Activated B cell treated with CpG ODN at 0.5 μM for 24 hours (primary cell): ENCODE measurements at regions of chr1 and their contacts with region 1.

Region 1: DNA sequence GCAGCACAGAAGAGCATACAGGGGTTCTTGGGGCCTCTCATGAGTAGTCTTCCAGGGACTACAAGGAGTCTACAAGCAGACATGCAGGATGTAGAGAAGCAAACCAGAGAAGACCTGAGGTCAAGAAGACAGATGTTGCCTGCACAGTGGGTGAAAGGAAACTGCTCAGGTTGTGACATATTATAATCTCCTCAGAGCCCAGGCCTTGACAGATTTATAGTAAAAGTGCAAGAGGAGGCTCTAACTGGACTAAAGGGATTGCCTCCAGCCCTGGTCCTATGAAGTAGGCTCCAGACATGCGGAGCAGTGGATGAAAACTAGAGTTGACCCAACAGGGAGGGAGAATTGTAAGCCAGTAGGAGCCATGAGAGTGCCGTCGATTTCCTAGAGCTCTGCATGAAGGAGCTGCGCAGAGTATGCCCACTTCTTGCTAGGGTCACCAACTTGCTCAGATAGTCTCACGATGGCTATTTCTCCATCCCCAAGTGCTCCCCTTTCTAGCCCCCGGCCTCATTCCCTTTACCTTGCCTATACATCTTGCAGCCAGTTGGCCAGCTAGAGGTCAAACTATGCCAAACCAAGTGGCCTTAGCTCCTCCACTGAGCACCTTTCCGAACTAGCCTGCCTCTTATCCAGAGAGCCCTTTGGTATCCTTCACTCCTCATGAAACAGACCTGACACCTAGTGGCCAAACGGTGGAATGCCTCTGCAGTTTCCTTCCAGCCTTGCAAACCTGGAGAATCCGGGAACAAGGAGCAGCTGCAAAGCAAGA is 36.2 kb upstream of the IPO9 start:
- DNase-seq: peak; percentile 24
- ATAC-seq: peak; percentile 54
- H3K4me3 Mint-ChIP-seq: no peak overlapping the region
- H3K27ac Mint-ChIP-seq: no peak overlapping the region
- H3K4me1 Mint-ChIP-seq: peaks cover 3% of the 10 kb centered on the region
- H3K27me3 Mint-ChIP-seq: no peaks in the 10 kb centered on the region
- CTCF ChIP-seq: peak; percentile 63

Region 2: GRCh38 chr1:201559679-201560162 is 233.0 kb before region 1 on chr1:
- CTCF ChIA-PET with region 1: interaction called, 91 read pairs
- POLR2A ChIA-PET with region 1: no interaction called
- intact Hi-C with region 1: loop called (anchors 1 kb)
- DNase-seq: peak; percentile 57
- ATAC-seq: peak; percentile 88
- H3K4me3 Mint-ChIP-seq: no peak overlapping the region
- H3K27ac Mint-ChIP-seq: no peak overlapping the region
- H3K4me1 Mint-ChIP-seq: peaks cover 4% of the 10 kb centered on the region
- H3K27me3 Mint-ChIP-seq: no peaks in the 10 kb centered on the region
- CTCF ChIP-seq: peak; percentile 34

Region 3: GRCh38 chr1:201628490-201628889 is 164.2 kb before region 1 on chr1:
- CTCF ChIA-PET with region 1: no interaction called
- POLR2A ChIA-PET with region 1: no interaction called
- intact Hi-C with region 1: no loop called
- DNase-seq: no peak
- ATAC-seq: no peak
- H3K4me3 Mint-ChIP-seq: no peak overlapping the region
- H3K27ac Mint-ChIP-seq: no peak overlapping the region
- H3K4me1 Mint-ChIP-seq: no peaks in the 10 kb centered on the region
- H3K27me3 Mint-ChIP-seq: no peaks in the 10 kb centered on the region
- CTCF ChIP-seq: no peak

Region 4: GRCh38 chr1:201731142-201731541 is 61.6 kb before region 1 on chr1:
- CTCF ChIA-PET with region 1: no interaction called
- POLR2A ChIA-PET with region 1: no interaction called
- intact Hi-C with region 1: no loop called
- DNase-seq: no peak
- ATAC-seq: no peak
- H3K4me3 Mint-ChIP-seq: no peak overlapping the region
- H3K27ac Mint-ChIP-seq: no peak overlapping the region
- H3K4me1 Mint-ChIP-seq: peaks cover 3% of the 10 kb centered on the region
- H3K27me3 Mint-ChIP-seq: peaks cover 20% of the 10 kb centered on the region
- CTCF ChIP-seq: no peak

Region 5: DNA sequence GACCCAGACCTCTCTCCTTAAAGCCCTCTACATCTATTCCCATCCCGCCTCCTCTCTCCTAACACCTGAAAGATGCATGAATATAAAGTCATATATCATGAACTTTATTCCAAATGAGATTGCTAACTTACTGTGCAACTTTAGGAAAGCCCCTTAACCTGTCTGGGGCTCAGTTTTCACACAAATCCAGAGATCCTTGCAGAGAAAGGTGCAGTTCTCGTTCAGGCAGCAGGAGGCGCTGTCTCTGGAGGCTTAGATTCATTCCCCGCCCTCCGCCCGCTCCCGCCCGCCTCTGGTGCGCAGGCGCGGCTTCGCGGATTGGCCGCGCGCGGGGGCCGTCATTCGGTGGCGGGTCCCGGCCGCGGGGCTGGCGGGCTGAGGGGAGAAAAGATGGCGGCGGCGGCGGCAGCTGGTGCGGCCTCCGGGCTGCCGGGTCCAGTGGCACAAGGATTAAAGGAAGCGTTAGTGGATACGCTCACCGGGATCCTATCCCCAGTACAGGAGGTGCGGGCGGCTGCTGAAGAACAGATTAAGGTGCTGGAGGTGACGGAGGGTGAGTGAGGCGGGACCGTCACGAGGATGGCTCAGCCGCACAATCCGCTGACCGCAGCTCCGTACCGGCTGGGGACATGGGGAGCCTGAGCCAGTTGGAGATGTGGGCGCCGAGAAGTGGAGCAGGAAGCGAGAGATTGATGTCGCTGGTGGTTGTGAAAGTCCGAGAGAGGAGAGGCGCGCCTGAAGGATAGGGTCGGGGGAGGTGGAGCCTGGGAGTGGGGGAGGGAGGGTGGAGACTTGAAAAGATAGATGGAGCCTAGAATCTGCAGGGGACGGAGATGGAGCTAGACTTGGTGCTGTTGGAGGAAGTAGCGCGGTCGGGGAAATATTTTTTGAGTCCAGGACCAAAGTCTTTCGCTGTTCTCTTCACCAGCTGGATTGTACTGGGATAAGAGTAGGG is 36.4 kb after region 1 on chr1 and contains the start of gene IPO9:
- CTCF ChIA-PET with region 1: no interaction called
- POLR2A ChIA-PET with region 1: no interaction called
- intact Hi-C with region 1: no loop called
- DNase-seq: peak; percentile 95
- ATAC-seq: peak; percentile 94
- H3K4me3 Mint-ChIP-seq: peak within 1 kb of the TSS; percentile 93
- H3K27ac Mint-ChIP-seq: peak within 1 kb of the TSS; percentile 96
- H3K4me1 Mint-ChIP-seq: peaks cover 42% of the 10 kb centered on the region
- H3K27me3 Mint-ChIP-seq: no peaks in the 10 kb centered on the region
- CTCF ChIP-seq: peak; percentile 35
- total RNA-seq, gene IPO9: 45.7 and 48.2 TPM in 2 replicates